Calu3 (cell line): ENCODE measurements at regions of chr2 and their contacts with region 1.

Region 1: GRCh38 chr2:216215658-216216390 is 106.7 kb downstream of the XRCC5 start:
- DNase-seq: no peak
- H3K4me3 Mint-ChIP-seq: no peak overlapping the region
- H3K27ac Mint-ChIP-seq: no peak overlapping the region
- H3K4me1 Mint-ChIP-seq: peaks cover 9% of the 10 kb centered on the region
- H3K27me3 Mint-ChIP-seq: no peaks in the 10 kb centered on the region
- CTCF ChIP-seq: peak; percentile 24

Region 2: GRCh38 chr2:216478151-216478550 is 262.3 kb after region 1 on chr2:
- CTCF ChIA-PET with region 1: no interaction called
- intact Hi-C with region 1: loop called (anchors 10 kb)
- DNase-seq: peak; percentile 59
- H3K4me3 Mint-ChIP-seq: no peak overlapping the region
- H3K27ac Mint-ChIP-seq: no peak overlapping the region
- H3K4me1 Mint-ChIP-seq: peaks cover 15% of the 10 kb centered on the region
- H3K27me3 Mint-ChIP-seq: no peaks in the 10 kb centered on the region
- CTCF ChIP-seq: no peak